Posterior cingulate gyrus (tissue), 11 donors: ENCODE measurements at regions of chr12 and their contacts with region 1.

Region 1: DNA sequence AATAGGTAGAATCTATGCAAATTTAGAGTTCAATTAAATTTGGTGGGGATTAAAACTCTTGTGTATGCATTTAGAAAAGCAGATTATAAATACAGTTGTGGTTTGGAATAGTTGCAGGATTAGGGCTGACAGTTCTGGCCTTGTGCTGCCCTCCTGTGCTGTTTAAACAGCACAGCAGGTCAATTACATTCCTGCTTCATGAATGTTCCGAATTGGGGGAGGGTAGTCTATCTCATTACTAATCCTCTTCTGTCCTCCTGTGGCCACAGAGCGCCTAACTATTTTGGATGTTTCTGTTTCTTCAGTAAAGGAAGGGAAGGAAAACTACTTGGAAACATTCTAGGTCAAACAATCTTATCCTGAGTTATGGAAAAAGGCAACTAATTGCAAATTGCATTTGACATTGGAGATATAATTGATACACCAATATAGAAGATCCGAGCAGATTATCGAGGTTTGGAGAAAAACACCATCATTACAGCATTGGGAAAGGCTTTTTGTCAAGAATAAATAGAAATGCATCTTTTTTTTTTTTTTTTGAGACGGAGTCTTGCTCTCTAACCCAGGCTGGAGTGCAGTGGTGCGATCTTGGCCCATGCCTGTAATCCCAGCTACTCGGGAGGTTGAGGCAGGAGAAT is 8.7 kb upstream of the GPR19 start:
- DNase-seq: peak in 5 of 10 donors; percentile 40 to 90 (median 53)

Region 2: DNA sequence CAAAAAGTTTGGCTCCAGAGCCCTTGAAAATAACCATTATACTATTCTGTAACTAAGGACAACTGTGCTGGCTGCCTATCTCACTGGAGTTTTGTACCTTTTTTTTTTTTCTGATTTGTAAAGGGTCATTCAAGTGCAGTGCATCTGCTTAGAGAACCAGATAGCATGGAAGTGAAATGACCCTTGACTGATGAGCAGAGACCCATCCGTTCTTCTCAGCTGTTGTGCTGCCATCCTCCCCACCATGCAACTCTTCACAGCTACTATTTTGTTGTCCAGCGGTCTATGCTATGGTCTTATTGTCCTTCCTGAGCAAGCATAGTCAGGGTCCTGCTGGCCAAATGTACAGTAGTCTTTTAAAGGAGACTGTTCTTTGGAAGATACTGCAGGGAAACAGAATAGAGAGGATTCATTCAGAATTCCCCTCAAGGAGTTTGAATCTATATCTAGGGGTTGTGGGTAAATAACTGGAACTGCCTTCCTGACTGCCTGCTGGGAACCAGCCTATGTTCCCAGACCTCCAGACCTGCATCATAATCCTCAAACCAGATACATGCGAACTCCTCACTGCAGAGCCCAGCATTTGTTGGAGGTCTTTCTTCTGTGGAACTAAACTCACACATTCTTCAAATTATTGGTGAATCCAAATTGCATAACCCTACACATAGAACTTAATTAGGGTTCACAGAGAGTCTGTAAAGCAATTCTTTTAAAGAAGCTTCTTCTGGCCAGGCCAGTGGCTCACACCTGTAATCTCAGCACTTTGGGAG is 49.8 kb before region 1 on chr12:
- intact Hi-C with region 1: loop called (anchors 5 kb)
- DNase-seq: no peak